ENCODE measurements at regions of chr9 and their contacts with region 1.

Region 1: GRCh38 chr9:20722221-20722620 is 38.2 kb downstream of the FOCAD start:
- DNase-seq: no peak
- ATAC-seq: no peak
- H3K4me3 ChIP-seq: no peak overlapping the region
- H3K27ac ChIP-seq: no peak overlapping the region
- H3K4me1 ChIP-seq: no peaks in the 10 kb centered on the region; the same call in 1 of the 2 replicates
- H3K27me3 ChIP-seq: no peaks in the 10 kb centered on the region
- CTCF ChIP-seq: no peak
- EP300 ChIP-seq: no peak
- POLR2A ChIP-seq: no peak
- RAD21 ChIP-seq: no peak

Region 2: DNA sequence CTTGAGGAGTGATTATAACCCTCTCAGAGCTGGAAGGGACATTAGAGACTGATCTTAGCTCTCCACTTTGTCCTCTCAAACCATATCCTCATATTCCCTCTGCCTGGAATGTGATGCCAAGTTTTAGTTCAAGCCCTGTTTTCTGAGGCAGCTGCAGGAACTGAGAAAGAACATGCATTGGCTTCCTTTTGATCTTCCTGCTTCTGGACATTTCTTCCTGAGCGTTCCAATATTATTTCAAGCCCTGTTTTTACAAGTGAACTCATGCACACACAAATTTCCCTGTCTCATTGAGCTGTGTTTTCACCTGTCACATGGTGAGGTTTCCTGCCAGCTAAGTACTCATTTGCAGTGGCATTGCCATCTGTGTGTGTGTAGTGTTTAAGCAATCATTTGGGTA is 21.2 kb before region 1 on chr9:
- CTCF ChIA-PET with region 1: interaction called, 4 read pairs
- POLR2A ChIA-PET with region 1: no interaction called
- RAD21 ChIA-PET with region 1: no interaction called
- SMC1A ChIA-PET with region 1: interaction called, 19 read pairs
- in situ Hi-C with region 1: no loop called
- intact Hi-C with region 1: no loop called
- DNase-seq: no peak
- ATAC-seq: no peak
- H3K4me3 ChIP-seq: no peak overlapping the region
- H3K27ac ChIP-seq: no peak overlapping the region
- H3K4me1 ChIP-seq: no peaks in the 10 kb centered on the region
- H3K27me3 ChIP-seq: no peaks in the 10 kb centered on the region
- CTCF ChIP-seq: no peak
- EP300 ChIP-seq: no peak
- POLR2A ChIP-seq: no peak
- RAD21 ChIP-seq: no peak

Region 3: GRCh38 chr9:20707708-20708107 is 14.5 kb before region 1 on chr9:
- CTCF ChIA-PET with region 1: interaction called, 4 read pairs
- POLR2A ChIA-PET with region 1: interaction called, 4 read pairs
- RAD21 ChIA-PET with region 1: no interaction called
- SMC1A ChIA-PET with region 1: interaction called, 19 read pairs
- in situ Hi-C with region 1: no loop called
- intact Hi-C with region 1: no loop called
- DNase-seq: no peak
- ATAC-seq: no peak
- H3K4me3 ChIP-seq: no peak overlapping the region
- H3K27ac ChIP-seq: no peak overlapping the region
- H3K4me1 ChIP-seq: no peaks in the 10 kb centered on the region
- H3K27me3 ChIP-seq: no peaks in the 10 kb centered on the region
- CTCF ChIP-seq: no peak
- EP300 ChIP-seq: no peak
- POLR2A ChIP-seq: no peak
- RAD21 ChIP-seq: no peak

Measured in GM12878 (cell line).